ENCODE measurements at regions of chrX and their contacts with region 1.

Region 1: GRCh38 chrX:151151665-151152267 is 24.6 kb upstream of the GPR50 start:
- DNase-seq: peak in 3 of 10 donors; percentile 10 to 38 (median 33)
- H3K4me3 ChIP-seq: no peak overlapping the region
- H3K27ac ChIP-seq: no peak overlapping the region
- H3K27me3 ChIP-seq: peaks cover 0 to 94% (median 13%) of the 10 kb centered on the region in 45 donors
- CTCF ChIP-seq: peak; percentile 42 to 91 (median 77)

Region 2: DNA sequence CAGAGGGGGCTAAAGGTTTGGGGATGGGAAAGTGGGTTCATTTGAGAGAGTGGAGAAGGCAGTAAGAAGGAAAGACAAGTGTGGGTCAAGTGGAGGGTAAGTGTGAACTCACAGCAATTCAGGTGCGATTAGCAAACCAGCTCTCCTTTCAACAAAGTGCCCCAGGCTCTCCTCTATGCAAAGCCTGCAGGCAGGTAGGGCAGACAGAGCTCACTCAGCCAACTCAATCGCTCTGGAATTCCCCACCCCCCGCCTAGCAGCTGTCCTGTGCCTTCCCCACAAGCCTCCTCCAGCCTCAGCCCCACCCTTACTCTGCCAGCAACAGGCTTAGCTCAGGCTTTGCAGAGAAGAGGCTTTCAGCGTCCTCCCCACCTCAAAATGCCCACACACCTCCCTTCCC is 803.4 kb before region 1 on chrX:
- intact Hi-C with region 1: no loop called
- DNase-seq: no peak
- H3K4me3 ChIP-seq: no peak overlapping the region
- H3K27ac ChIP-seq: no peak overlapping the region
- H3K27me3 ChIP-seq: peaks cover 0 to 71% (median 11%) of the 10 kb centered on the region in 45 donors
- CTCF ChIP-seq: no peak

Region 3: DNA sequence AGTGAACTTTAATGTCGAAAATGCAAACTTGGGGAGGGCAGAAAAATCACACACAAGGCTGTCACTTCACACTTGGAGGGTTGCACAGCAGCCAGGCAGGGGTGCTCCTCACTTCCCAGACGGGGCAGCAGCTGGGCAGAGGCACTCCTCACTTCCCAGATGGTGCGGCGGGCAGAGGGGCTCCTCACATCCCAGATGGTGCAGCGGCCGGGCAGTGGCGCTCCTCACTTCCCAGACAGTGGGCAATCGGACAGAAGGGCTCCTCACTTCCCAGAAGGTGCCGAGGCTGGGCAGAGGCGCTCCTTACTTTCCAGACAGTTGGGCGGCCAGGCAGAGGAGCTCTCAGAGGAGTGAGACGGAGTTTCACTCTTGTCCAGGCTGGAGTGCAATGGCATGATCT is 78.0 kb before region 1 on chrX:
- intact Hi-C with region 1: no loop called
- DNase-seq: no peak
- H3K4me3 ChIP-seq: no peak overlapping the region
- H3K27ac ChIP-seq: no peak overlapping the region
- H3K27me3 ChIP-seq: peaks cover 0 to 27% (median 0%) of the 10 kb centered on the region in 45 donors
- CTCF ChIP-seq: no peak

Region 4: DNA sequence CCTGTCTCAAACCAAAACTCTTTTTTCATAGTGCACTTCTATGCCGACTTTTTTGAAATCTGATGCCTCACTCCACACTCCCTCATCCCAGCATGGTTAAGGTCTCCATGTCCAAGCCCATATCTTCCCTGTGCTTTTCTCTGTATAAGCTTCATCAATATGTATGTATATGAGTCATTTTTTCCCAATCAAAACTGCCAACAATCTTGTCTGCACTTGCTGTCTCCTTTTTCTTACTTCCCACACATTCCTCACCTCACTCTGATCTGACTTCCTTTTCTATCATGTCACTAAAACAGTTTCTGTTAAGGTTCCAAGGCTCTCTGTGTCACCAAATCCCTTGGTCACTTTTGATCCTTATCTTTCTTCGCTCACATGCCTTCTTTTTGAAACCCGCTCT is 63.5 kb before region 1 on chrX:
- intact Hi-C with region 1: no loop called
- DNase-seq: no peak
- H3K4me3 ChIP-seq: no peak overlapping the region
- H3K27ac ChIP-seq: no peak overlapping the region
- H3K27me3 ChIP-seq: peaks cover 0 to 93% (median 24%) of the 10 kb centered on the region in 45 donors
- CTCF ChIP-seq: no peak

Region 5: DNA sequence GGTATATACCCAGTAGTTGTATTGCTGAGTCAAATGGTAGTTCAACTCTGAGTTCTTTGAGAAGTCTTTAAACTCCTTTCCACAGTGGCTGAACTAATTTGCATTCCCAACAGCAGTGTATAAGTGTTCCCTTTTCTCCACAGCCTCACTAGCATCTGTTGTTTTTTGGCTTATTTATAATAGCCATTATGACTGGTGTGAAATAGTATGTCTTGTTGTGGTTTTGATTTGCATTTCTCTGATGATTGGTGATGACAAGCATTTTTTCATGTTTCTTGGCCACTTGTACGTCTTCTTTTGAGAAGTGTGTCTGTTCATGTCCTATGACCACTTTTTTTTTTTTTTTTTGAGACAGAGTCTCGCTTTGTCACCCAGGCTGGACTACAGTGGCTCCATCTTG is 55.1 kb after region 1 on chrX:
- intact Hi-C with region 1: no loop called
- DNase-seq: no peak
- H3K4me3 ChIP-seq: no peak overlapping the region
- H3K27ac ChIP-seq: no peak overlapping the region
- H3K27me3 ChIP-seq: peaks cover 0 to 13% (median 0%) of the 10 kb centered on the region in 45 donors
- CTCF ChIP-seq: no peak

Region 6: DNA sequence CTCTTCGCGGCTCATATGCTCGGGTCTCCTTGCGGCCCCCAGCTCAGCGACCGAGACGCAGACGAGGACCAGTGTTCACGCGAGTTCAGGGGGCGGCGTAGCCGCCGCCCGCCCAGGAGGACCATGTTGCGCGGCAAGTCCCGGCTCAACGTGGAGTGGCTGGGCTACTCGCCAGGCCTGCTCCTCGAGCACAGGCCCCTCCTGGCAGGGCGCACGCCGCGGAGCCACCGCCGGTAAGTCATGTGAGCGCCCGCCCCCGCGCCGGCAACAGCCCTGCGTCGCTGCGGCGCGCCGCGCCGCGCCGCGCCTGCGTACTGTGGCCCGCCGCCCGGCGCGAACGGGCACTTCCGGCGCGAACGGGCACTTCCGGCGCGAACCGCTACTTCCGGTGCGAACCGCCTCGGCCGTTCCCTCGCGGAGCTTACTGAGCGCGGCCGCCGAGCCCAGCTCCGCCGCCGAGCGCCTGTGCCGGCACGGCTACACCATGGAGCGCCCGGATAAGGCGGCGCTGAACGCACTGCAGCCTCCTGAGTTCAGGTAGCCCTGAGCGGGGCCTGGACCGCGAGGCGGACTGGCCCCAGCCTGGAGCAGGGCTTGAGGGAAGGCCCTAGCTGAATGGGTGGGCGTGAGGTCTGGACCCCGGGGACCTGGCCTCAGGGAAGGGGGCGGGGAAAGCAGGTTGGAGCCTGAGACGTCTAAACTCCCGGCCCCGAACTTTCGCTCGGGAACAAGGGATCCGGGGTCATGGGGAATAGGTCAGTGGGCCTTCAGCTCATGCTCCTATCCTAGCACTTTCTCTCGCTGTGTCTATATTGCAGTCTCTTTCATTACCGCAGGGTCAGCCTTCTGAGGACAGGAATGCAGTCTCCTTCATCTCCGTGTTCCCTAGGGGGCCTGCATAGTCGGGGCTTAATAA is 245.3 kb after region 1 on chrX and contains the start of gene VMA21:
- intact Hi-C with region 1: loop called in 1 of 2 experiments (anchors 10 kb)
- DNase-seq: peak; percentile 61 to 87 (median 78)
- H3K4me3 ChIP-seq: peak within 1 kb of the TSS; percentile 32 to 88 (median 76)
- H3K27ac ChIP-seq: peak within 1 kb of the TSS in 58 of 59 donors; percentile 29 to 94 (median 84)
- H3K27me3 ChIP-seq: peaks cover 0 to 16% (median 0%) of the 10 kb centered on the region in 45 donors
- CTCF ChIP-seq: peak in 2 of 56 donors; percentile 10 to 29
- total RNA-seq, gene VMA21: 19.6 to 44.8 (median 33.2) TPM

Region 7: DNA sequence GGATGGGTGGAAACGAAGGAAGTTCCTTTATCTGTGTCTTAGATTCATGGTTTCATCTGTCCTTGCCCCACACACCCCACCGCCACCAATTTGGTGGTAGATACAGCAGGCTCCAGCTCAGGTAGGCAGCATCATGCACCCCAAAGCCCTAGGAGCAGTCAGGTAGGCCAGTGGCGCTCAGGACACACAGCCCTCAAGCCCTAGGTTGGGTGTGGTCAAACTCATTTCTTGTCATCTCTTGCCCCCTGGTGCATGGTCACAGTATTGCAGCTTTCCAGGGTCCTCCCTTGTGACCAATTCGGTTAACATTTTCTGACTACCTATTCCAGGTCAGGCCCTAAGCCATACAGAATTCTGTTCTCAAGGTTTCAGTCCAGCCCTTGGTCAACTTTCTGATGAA is 529.0 kb after region 1 on chrX:
- intact Hi-C with region 1: loop called (anchors 2 to 5 kb)
- DNase-seq: peak in 3 of 10 donors; percentile 51 to 54 (median 52)
- H3K4me3 ChIP-seq: no peak overlapping the region
- H3K27ac ChIP-seq: no peak overlapping the region
- H3K27me3 ChIP-seq: peaks cover 0 to 83% (median 22%) of the 10 kb centered on the region in 45 donors
- CTCF ChIP-seq: peak in 55 of 56 donors; percentile 36 to 73 (median 61)

Region 8: GRCh38 chrX:152632445-152633097 is 1480.8 kb after region 1 on chrX:
- intact Hi-C with region 1: loop called in 1 of 2 experiments (anchors 5 kb)
- DNase-seq: peak in 6 of 10 donors; percentile 22 to 76 (median 58)
- H3K4me3 ChIP-seq: no peak overlapping the region
- H3K27ac ChIP-seq: no peak overlapping the region
- H3K27me3 ChIP-seq: peaks cover 0 to 78% (median 25%) of the 10 kb centered on the region in 45 donors
- CTCF ChIP-seq: peak; percentile 54 to 88 (median 76)

Measured in dorsolateral prefrontal cortex (tissue), 120 donors.